Activated CD4-positive, alpha-beta T cell treated with anti-CD3 and anti-CD28 coated beads for 36 hours (primary cell): ENCODE measurements at regions of chr16 and their contacts with region 1.

Region 1: GRCh38 chr16:68512183-68512582 is 26.9 kb upstream of the ZFP90 start:
- DNase-seq: no peak
- ATAC-seq: no peak
- H3K4me3 Mint-ChIP-seq: no peak overlapping the region
- H3K27ac Mint-ChIP-seq: no peak overlapping the region
- H3K4me1 Mint-ChIP-seq: no peaks in the 10 kb centered on the region
- H3K27me3 Mint-ChIP-seq: no peaks in the 10 kb centered on the region

Region 2: GRCh38 chr16:67806428-67807147 is 705.6 kb before region 1 on chr16 and contains the starts of genes RANBP10 and TSNAXIP1:
- CTCF ChIA-PET with region 1: no interaction called
- POLR2A ChIA-PET with region 1: no interaction called
- intact Hi-C with region 1: no loop called
- DNase-seq: peak; percentile 98
- ATAC-seq: peak; percentile 96
- H3K4me3 Mint-ChIP-seq: peak within 1 kb of the TSS; percentile 91
- H3K27ac Mint-ChIP-seq: peak within 1 kb of the TSS; percentile 91
- H3K4me1 Mint-ChIP-seq: peaks cover 39% of the 10 kb centered on the region
- H3K27me3 Mint-ChIP-seq: no peaks in the 10 kb centered on the region
- total RNA-seq, gene RANBP10: 15.6 to 18.0 TPM
- total RNA-seq, gene TSNAXIP1: 0.62 to 1.1 TPM

Region 3: GRCh38 chr16:68244903-68245853 is 267.0 kb before region 1 on chr16 and contains the start of gene PLA2G15:
- CTCF ChIA-PET with region 1: interaction called, 3 read pairs
- POLR2A ChIA-PET with region 1: no interaction called
- intact Hi-C with region 1: loop called in 1 of 2 experiments (anchors 1 kb)
- DNase-seq: peak; percentile 98
- ATAC-seq: peak; percentile 98
- H3K4me3 Mint-ChIP-seq: peak within 1 kb of the TSS; percentile 88
- H3K27ac Mint-ChIP-seq: peak within 1 kb of the TSS; percentile 83
- H3K4me1 Mint-ChIP-seq: peaks cover 15% of the 10 kb centered on the region
- H3K27me3 Mint-ChIP-seq: no peaks in the 10 kb centered on the region
- total RNA-seq, gene PLA2G15: 6.0 to 7.0 TPM

Region 4: GRCh38 chr16:68367030-68367429 is 145.2 kb before region 1 on chr16:
- CTCF ChIA-PET with region 1: interaction called, 18 read pairs
- POLR2A ChIA-PET with region 1: no interaction called
- intact Hi-C with region 1: loop called (anchors 1 to 2 kb)
- DNase-seq: peak; percentile 75
- ATAC-seq: peak; percentile 59
- H3K4me3 Mint-ChIP-seq: no peak overlapping the region
- H3K27ac Mint-ChIP-seq: no peak overlapping the region
- H3K4me1 Mint-ChIP-seq: peaks cover 37% of the 10 kb centered on the region
- H3K27me3 Mint-ChIP-seq: peaks cover 5% of the 10 kb centered on the region

Region 5: GRCh38 chr16:68396481-68396880 is 115.7 kb before region 1 on chr16:
- CTCF ChIA-PET with region 1: interaction called, 9 read pairs
- POLR2A ChIA-PET with region 1: no interaction called
- intact Hi-C with region 1: loop called (anchors 1 kb)
- DNase-seq: peak; percentile 69
- ATAC-seq: peak; percentile 60
- H3K4me3 Mint-ChIP-seq: no peak overlapping the region
- H3K27ac Mint-ChIP-seq: no peak overlapping the region
- H3K4me1 Mint-ChIP-seq: peaks cover 16% of the 10 kb centered on the region
- H3K27me3 Mint-ChIP-seq: no peaks in the 10 kb centered on the region

Region 6: GRCh38 chr16:68592466-68593337 is 80.5 kb after region 1 on chr16:
- CTCF ChIA-PET with region 1: no interaction called
- POLR2A ChIA-PET with region 1: no interaction called
- intact Hi-C with region 1: no loop called
- DNase-seq: no peak
- ATAC-seq: no peak
- H3K4me3 Mint-ChIP-seq: no peak overlapping the region
- H3K27ac Mint-ChIP-seq: peak overlapping the region; percentile 0
- H3K4me1 Mint-ChIP-seq: peaks cover 2% of the 10 kb centered on the region
- H3K27me3 Mint-ChIP-seq: no peaks in the 10 kb centered on the region

Region 7: DNA sequence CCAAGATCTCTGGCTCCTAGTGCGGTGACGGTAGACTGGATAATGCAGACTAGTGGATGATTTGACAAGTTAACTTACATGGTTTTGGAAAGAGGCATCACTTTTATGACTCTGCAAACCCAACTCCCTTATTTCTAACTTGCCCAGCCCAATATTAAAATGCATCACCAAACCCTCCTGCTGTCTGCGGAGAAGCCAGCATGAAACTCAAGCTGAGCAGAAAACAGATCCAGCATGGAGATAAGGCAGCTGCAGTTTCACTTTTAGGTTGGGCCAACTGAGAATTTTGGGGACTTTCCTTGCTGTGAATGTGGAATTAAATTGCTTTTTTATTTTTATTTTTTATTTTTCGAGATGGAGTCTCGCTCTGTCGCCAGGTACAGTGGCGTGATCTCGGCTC is 252.7 kb after region 1 on chr16:
- CTCF ChIA-PET with region 1: no interaction called
- POLR2A ChIA-PET with region 1: no interaction called
- intact Hi-C with region 1: no loop called
- DNase-seq: peak; percentile 61
- ATAC-seq: peak; percentile 52
- H3K4me3 Mint-ChIP-seq: no peak overlapping the region
- H3K27ac Mint-ChIP-seq: peak overlapping the region; percentile 64
- H3K4me1 Mint-ChIP-seq: peaks cover 40% of the 10 kb centered on the region
- H3K27me3 Mint-ChIP-seq: no peaks in the 10 kb centered on the region

Region 8: GRCh38 chr16:68936736-68937631 is 424.8 kb after region 1 on chr16:
- CTCF ChIA-PET with region 1: no interaction called
- POLR2A ChIA-PET with region 1: no interaction called
- intact Hi-C with region 1: no loop called
- DNase-seq: no peak
- ATAC-seq: no peak
- H3K4me3 Mint-ChIP-seq: no peak overlapping the region
- H3K27ac Mint-ChIP-seq: no peak overlapping the region
- H3K4me1 Mint-ChIP-seq: no peaks in the 10 kb centered on the region
- H3K27me3 Mint-ChIP-seq: no peaks in the 10 kb centered on the region